ENCODE measurements at regions of chr7 and their contacts with region 1.

Region 1: DNA sequence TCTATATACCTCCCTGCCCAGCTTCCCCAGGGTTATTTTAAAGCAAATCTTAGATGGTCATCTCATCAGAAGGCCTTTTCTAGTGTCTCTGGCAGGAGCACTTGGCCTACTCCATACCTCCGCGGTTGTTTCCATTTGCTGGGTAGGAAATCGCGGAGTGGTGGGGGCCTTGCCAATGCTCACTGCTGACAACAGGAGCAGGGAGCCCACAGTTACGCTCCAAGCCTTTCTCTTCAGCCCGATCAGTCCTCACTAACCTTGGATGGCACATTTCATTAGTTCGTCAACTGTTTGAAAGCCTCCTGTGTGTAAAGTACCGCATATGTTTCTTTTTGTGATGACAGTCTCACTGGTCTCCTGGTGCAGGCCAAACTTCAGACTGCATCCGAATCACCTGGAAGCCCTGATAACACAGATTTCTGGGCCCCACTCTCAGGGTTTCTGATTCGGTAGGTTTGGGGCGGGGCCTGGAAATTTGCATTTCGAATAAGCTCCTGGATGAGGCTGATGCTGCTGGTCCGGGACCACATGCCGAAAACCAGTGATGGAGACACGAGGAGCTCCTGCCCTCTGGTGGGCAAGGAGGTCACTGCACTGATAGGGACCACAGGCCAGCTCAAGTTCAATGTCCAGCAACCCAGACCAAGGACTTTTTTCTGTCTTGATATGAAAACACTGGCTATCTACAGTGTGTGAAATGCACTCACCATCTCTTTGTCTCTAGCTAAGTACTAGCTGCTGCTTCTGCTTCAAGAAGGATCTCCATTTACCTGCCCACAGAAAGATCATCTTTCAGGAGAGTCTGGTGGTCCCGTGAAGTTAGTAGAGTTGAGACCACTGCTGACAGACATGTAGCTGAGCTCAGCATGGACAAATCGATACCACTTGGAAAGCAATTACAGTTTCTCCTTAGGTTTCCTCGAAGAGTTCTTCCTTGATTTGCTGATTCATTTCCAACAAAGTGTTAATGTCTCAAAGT is 14.0 kb downstream of the LRGUK start:
- DNase-seq: no peak
- H3K4me3 ChIP-seq: no peak overlapping the region
- CTCF ChIP-seq: peak; percentile 93

Region 2: GRCh38 chr7:134126966-134127848 is 14.0 kb before region 1 on chr7 and contains the start of gene LRGUK:
- CTCF ChIA-PET with region 1: interaction called, 26 read pairs
- POLR2A ChIA-PET with region 1: no interaction called
- DNase-seq: peak; percentile 17
- H3K4me3 ChIP-seq: peak within 1 kb of the TSS; percentile 64
- CTCF ChIP-seq: no peak

Region 3: GRCh38 chr7:134154581-134155130 is 13.5 kb after region 1 on chr7:
- CTCF ChIA-PET with region 1: interaction called, 32 read pairs
- POLR2A ChIA-PET with region 1: no interaction called
- DNase-seq: no peak
- H3K4me3 ChIP-seq: no peak overlapping the region
- CTCF ChIP-seq: no peak

Region 4: DNA sequence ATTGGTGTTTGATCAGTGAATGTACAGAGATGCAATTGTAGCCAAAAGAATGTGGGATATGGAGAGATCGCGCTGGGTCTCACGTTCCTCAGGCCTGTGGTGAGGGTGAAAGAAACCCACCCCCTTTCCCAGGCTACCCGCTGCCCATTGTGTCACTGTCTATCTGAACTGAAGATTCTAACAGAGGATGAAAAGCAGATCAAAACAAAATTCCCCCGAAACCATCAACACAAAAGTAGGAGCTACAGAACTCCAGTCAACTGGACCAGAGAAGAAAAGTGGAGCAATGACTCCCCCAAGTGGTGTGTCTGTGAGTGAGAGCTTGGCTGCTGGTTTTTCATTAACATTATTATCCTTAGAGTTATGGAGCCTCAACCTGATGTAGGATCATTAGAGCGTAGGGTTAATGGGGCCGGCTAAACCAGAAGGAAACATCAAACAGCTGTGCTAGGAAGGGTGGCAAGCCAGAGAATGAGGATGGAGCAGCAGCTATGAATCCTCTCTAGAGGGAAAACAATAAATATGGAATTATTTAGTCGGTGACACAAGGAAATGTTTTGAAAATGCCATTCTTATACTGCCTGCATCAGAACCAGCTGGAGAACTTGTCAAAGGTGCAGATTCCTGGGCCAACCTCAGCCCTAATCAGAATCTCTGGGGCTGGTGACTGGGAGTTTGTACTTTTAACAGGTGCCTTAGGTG is 279.4 kb after region 1 on chr7:
- CTCF ChIA-PET with region 1: interaction called, 19 read pairs
- POLR2A ChIA-PET with region 1: no interaction called
- DNase-seq: no peak
- H3K4me3 ChIP-seq: no peak overlapping the region
- CTCF ChIP-seq: peak; percentile 55